ENCODE measurements at regions of chr5 and their contacts with region 1.

Region 1: DNA sequence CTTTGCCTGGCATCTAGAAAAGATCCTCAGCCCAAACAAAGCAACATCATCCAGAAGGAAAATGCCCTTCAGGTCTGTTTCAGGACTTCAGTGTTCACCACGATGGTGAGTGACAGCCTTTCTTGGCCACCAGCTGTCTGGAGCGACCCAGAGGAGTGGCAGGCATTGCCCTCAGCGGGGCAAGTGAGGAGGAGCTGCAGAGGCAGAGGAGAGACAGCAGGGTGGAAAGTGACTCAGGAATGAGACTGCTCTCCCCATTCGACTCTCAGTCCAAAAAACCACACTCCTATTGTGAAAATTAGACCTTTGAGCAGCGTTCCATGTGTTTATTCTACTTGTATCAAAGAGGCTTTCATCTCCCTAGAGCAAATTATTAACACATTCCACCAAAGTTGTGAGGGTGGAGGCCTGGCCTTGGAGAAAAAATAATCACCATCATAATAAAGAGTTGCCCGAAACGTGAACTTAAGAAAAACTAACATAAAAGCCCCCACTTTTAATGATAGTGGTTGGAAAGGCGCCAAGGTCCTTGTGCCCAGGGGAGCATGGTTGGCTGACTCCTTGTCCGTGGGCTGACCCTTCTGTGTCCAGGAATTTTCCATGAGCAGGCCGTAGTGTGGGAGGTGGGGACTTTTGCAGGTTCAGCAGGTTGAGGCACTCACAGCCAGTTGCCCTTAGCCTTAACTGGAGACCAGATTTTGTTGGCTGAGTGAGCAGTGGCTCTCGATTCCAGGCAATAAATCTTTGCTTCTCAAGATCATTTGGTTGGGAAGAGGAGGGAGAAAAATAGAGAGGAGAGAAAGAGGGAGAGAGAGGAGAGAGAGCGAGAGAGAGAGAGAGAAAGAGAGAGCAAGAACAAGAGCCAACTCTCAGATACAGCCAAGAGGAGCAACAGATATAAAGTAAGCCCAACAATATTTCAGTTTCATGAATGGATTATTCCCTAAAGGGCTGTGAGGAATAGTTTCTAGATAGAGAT is 125.9 kb upstream of the ANKRD55 start:
- DNase-seq: peak; percentile 100
- ATAC-seq: peak; percentile 99
- H3K4me3 ChIP-seq: peak overlapping the region; percentile 28 to 53 (median 35)
- H3K27ac ChIP-seq: peak overlapping the region; percentile 100
- H3K4me1 ChIP-seq: peaks cover 63% of the 10 kb centered on the region
- H3K27me3 ChIP-seq: no peaks in the 10 kb centered on the region
- CTCF ChIP-seq: peak; percentile 35; the same call in 1 of the 2 replicates
- EP300 ChIP-seq: peak; percentile 95 to 97; a peak in 3 of 4 replicates
- POLR2A ChIP-seq: peak; percentile 71 to 78
- RAD21 ChIP-seq: peak; percentile 68

Region 2: DNA sequence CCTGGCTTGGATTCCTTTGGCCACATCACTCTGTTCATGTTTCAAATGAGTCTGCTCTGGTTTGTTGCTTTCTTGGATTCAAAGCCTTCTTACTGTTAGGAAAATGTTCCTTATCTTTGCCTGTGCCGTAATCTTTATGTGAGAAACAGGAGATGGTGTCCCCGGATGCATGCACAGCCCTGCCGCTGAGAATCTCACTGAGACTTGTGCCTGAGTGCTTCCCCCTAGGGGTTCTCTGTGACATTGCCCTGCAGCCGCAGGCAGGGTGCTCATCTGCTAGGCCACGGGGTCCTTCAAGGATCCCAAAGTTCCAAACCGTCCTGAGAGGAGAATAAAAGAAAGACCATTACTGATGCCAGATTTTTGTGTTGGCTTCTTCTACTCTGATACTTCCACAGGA is 44.5 kb before region 1 on chr5:
- CTCF ChIA-PET with region 1: no interaction called
- POLR2A ChIA-PET with region 1: no interaction called
- in situ Hi-C with region 1: no loop called
- intact Hi-C with region 1: loop called (anchors 1 kb)
- DNase-seq: peak; percentile 21
- ATAC-seq: peak; percentile 89
- H3K4me3 ChIP-seq: no peak overlapping the region
- H3K27ac ChIP-seq: no peak overlapping the region
- H3K4me1 ChIP-seq: peaks cover 40% of the 10 kb centered on the region
- H3K27me3 ChIP-seq: no peaks in the 10 kb centered on the region
- CTCF ChIP-seq: peak; percentile 59
- EP300 ChIP-seq: no peak
- POLR2A ChIP-seq: no peak
- RAD21 ChIP-seq: peak; percentile 56; the same call in 1 of the 2 replicates

Region 3: DNA sequence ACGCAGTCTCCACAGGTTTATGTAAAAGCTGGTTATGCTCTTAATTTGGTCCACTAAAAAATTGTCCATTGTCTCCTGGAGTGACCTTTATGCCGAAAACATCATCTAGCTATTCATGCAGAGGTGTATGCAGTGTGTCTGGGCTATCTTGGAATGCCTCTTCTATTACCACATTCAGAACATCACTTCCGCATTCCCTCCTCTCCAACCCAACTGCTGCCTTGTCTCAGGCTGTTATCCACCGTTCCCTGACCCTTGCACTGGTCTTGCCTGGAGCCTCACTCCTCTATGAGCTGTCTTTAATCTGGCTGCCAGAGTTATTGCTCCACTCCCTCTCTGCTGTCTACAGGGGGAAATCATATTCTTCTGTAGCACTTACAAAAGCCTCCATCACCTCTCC is 88.2 kb after region 1 on chr5:
- CTCF ChIA-PET with region 1: no interaction called
- POLR2A ChIA-PET with region 1: interaction called, 11 read pairs
- in situ Hi-C with region 1: no loop called
- intact Hi-C with region 1: loop called (anchors 1 kb)
- DNase-seq: peak; percentile 93
- ATAC-seq: peak; percentile 99
- H3K4me3 ChIP-seq: peak overlapping the region in 1 of 3 experiments; percentile 14; a peak in 1 of 6 replicates
- H3K27ac ChIP-seq: peak overlapping the region; percentile 58
- H3K4me1 ChIP-seq: peaks cover 44% of the 10 kb centered on the region
- H3K27me3 ChIP-seq: no peaks in the 10 kb centered on the region
- CTCF ChIP-seq: no peak
- EP300 ChIP-seq: peak in 1 of 2 experiments; percentile 79; a peak in 2 of 4 replicates
- POLR2A ChIP-seq: no peak
- RAD21 ChIP-seq: peak; percentile 40; the same call in 1 of the 2 replicates

Region 4: GRCh38 chr5:56638061-56638621 is 279.1 kb after region 1 on chr5:
- CTCF ChIA-PET with region 1: no interaction called
- POLR2A ChIA-PET with region 1: no interaction called
- in situ Hi-C with region 1: no loop called
- intact Hi-C with region 1: loop called (anchors 5 kb)
- DNase-seq: peak; percentile 94
- ATAC-seq: peak; percentile 92
- H3K4me3 ChIP-seq: peak overlapping the region in 2 of 3 experiments; percentile 24 to 41; a peak in 2 of 6 replicates
- H3K27ac ChIP-seq: peak overlapping the region; percentile 89
- H3K4me1 ChIP-seq: peaks cover 72% of the 10 kb centered on the region
- H3K27me3 ChIP-seq: no peaks in the 10 kb centered on the region
- CTCF ChIP-seq: no peak
- EP300 ChIP-seq: peak in 1 of 2 experiments; percentile 71; a peak in 2 of 4 replicates
- POLR2A ChIP-seq: no peak
- RAD21 ChIP-seq: no peak

Region 5: GRCh38 chr5:56814963-56815658 is 456.1 kb after region 1 on chr5 and contains the start of gene MAP3K1:
- CTCF ChIA-PET with region 1: no interaction called
- POLR2A ChIA-PET with region 1: no interaction called
- in situ Hi-C with region 1: no loop called
- intact Hi-C with region 1: loop called (anchors 5 kb)
- DNase-seq: peak; percentile 82
- ATAC-seq: peak; percentile 84
- H3K4me3 ChIP-seq: peak within 1 kb of the TSS; percentile 88 to 95 (median 89)
- H3K27ac ChIP-seq: peak within 1 kb of the TSS; percentile 93
- H3K4me1 ChIP-seq: peaks cover 43% of the 10 kb centered on the region
- H3K27me3 ChIP-seq: no peaks in the 10 kb centered on the region; a peak in 1 of 5 replicates
- CTCF ChIP-seq: peak; percentile 9; the same call in 1 of the 2 replicates
- EP300 ChIP-seq: no peak
- POLR2A ChIP-seq: peak; percentile 62 to 73; a peak in 3 of 4 replicates
- RAD21 ChIP-seq: peak; percentile 27
- total RNA-seq, gene MAP3K1: 30.3 and 44.1 TPM in 2 replicates